Activated CD4-positive, alpha-beta memory T cell treated with anti-CD3 and anti-CD28 coated beads for 36 hours (primary cell): ENCODE measurements at regions of chr1 and their contacts with region 1.

Region 1: GRCh38 chr1:89085781-89086180 is 20.8 kb upstream of the GBP1 start:
- DNase-seq: peak; percentile 43
- H3K4me3 Mint-ChIP-seq: no peak overlapping the region
- H3K27ac Mint-ChIP-seq: no peak overlapping the region
- H3K4me1 Mint-ChIP-seq: peaks cover 6% of the 10 kb centered on the region
- H3K27me3 Mint-ChIP-seq: no peaks in the 10 kb centered on the region

Region 2: DNA sequence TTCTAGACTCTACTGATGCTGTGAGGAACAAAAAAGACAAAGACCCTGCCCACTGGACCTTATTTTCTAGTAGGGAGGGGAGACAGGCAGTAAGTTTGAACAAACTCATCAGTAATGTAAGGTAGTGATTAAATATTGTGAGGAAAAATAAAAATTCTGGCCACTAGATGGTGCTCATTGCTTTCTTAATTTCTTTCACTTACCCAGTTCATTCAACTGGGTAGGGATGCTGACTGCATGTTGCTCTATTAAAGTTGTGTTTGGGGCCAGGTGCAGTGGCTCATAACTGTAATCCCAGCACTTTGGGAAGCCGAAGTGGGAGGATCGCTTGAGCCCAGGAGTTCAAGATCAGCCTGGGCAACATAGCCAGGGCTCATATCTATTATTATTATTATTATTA is 87.1 kb before region 1 on chr1:
- CTCF ChIA-PET with region 1: interaction called, 17 read pairs
- POLR2A ChIA-PET with region 1: no interaction called
- intact Hi-C with region 1: no loop called
- DNase-seq: no peak
- H3K4me3 Mint-ChIP-seq: no peak overlapping the region
- H3K27ac Mint-ChIP-seq: no peak overlapping the region
- H3K4me1 Mint-ChIP-seq: peaks cover 27% of the 10 kb centered on the region
- H3K27me3 Mint-ChIP-seq: no peaks in the 10 kb centered on the region

Region 3: DNA sequence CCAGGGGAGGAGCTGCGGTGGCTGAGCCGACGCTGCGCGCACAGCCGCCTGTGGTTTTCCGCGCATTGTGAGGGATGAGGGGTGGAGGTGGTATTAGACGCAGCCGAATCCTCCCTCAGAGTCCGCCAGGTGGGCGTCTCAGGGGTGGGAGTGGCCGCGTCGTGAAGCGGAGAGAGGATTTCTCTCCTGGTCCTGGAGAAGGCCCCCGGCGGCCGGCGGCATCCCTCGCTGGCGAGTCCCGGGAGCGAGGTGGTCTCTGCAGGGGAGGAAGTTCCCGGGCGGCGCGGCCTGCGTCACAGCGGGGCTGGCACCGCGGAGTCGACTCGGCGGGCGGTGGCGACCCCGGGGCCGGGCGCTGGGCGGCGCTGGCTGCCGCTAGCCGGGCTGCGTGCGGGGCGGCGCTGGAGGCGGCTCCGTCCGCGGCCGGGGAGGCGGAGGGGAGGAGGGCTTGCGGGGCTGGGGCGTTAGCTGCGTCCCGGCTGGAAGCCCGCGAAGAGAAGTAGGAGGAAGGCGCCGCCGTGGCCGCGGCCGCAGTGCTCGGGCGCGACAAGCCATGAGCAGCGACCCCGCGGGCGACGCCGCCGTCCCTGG is 547.0 kb after region 1 on chr1 and contains the start of gene LRRC8C:
- CTCF ChIA-PET with region 1: no interaction called
- POLR2A ChIA-PET with region 1: no interaction called
- intact Hi-C with region 1: no loop called
- DNase-seq: peak; percentile 90
- H3K4me3 Mint-ChIP-seq: peak within 1 kb of the TSS; percentile 93
- H3K27ac Mint-ChIP-seq: peak within 1 kb of the TSS; percentile 95
- H3K4me1 Mint-ChIP-seq: peaks cover 68% of the 10 kb centered on the region
- H3K27me3 Mint-ChIP-seq: no peaks in the 10 kb centered on the region
- total RNA-seq, gene LRRC8C: 36.4 to 40.4 TPM